Mammary epithelial cell (primary cell): ENCODE measurements at regions of chr1 and their contacts with region 1.

Region 1: GRCh38 chr1:19163261-19163660 is 46.8 kb downstream of the UBR4 start:
- DNase-seq: no peak
- H3K4me3 ChIP-seq: no peak overlapping the region
- H3K27ac ChIP-seq: no peak overlapping the region
- H3K4me1 ChIP-seq: no peaks in the 10 kb centered on the region
- H3K27me3 ChIP-seq: no peaks in the 10 kb centered on the region
- CTCF ChIP-seq: no peak

Region 2: DNA sequence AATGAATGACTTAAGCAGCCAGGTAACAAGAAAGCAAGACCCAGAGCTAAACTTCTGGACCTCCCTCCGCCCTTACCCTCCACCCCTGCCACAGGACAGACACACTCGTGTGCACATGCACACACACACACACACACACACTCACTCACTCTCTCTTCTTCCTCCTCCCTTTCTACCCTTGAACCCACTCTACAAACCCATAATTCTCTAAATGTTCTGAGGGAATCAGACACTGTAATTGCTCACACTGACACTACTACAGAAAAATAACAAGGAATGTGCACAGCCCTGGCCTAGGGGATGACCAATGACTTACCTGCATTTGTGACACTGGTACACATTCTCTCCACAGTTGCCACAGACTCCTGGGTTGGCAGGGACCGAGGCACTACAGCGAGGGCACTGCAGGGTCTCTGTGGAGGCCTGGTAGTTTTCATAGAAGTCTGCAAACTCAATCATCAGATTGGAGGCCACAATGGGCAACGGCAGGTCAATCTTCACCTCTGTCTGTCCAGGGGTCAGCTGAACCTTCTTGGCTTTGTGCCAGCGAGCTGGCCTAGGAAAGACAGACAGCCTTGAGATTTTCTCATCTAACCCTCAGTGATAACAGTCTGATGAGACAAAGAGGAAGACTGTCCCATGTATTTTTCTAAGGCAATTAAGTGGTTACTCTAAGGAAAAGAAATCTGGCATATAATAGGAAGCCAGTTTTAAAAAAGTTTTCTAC is 48.0 kb before region 1 on chr1:
- CTCF ChIA-PET with region 1: no interaction called
- dilution Hi-C with region 1: loop called (anchors 5 kb)
- in situ Hi-C with region 1: no loop called
- intact Hi-C with region 1: no loop called
- DNase-seq: no peak
- H3K4me3 ChIP-seq: no peak overlapping the region
- H3K27ac ChIP-seq: no peak overlapping the region
- H3K4me1 ChIP-seq: no peaks in the 10 kb centered on the region
- H3K27me3 ChIP-seq: no peaks in the 10 kb centered on the region
- CTCF ChIP-seq: no peak

Region 3: DNA sequence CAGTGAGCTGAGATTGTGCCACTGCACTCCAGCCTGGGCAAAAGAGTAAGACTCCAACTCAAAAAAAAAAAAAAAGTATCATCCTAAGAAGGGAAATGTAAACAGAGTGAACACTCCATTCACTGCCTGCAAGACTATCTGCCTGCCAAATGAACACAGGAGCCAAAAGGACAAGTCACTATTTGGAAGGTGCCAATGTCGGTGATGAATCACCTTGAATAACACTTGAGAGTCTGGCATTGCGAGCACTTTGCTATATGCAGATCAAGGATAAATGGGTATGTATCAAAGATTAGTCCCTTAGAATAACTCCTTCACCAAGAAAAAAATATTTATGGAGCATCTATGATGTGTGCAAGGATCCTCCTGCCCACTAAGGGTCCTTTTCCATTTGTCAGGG is 40.2 kb after region 1 on chr1:
- CTCF ChIA-PET with region 1: no interaction called
- dilution Hi-C with region 1: loop called (anchors 5 kb)
- in situ Hi-C with region 1: no loop called
- intact Hi-C with region 1: no loop called
- DNase-seq: peak; percentile 75
- H3K4me3 ChIP-seq: no peak overlapping the region
- H3K27ac ChIP-seq: no peak overlapping the region
- H3K4me1 ChIP-seq: peaks cover 18% of the 10 kb centered on the region
- H3K27me3 ChIP-seq: no peaks in the 10 kb centered on the region
- CTCF ChIP-seq: no peak